B cell (primary cell): ENCODE measurements at regions of chr3 and their contacts with region 1.

Region 1: DNA sequence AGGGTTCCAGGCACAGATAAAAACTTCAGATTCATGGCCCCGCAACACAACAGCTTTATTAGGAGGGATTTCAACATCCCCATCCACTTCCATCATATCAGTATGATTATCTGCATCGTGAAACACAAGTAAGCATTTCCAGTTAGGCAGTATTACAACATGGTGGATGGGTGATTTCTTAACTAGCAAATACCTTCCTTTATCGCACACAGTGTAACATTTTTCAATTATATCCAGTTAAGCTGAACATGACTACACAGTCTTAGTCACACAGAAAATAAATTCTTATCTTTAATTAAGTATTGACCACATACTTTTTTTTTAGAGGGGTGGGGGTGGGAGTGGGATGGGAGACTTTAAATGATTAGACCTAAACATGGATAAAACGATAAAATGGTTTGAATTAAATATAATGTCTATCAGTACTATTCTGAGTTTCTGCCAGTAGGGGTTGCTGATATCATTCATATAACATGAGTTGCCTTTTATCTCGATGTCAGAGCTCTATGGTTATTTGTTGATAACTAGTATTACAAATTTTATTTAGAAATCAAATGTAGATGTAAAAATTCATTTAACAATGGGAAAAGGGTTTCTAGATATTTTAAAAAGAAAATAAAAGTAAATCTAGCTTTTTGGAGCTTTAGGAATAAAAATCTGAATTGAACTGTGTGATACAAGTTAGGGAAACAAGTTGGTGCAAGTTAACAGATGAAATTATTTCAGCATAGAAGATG is 146.6 kb downstream of the TBL1XR1 start:
- DNase-seq: peak; percentile 69
- ATAC-seq: peak; percentile 72
- H3K4me3 ChIP-seq: no peak overlapping the region
- H3K4me3 Mint-ChIP-seq: no peak overlapping the region
- H3K27ac ChIP-seq: no peak overlapping the region
- H3K27ac Mint-ChIP-seq: no peak overlapping the region
- H3K4me1 ChIP-seq: no peaks in the 10 kb centered on the region
- H3K4me1 Mint-ChIP-seq: peaks cover 11% of the 10 kb centered on the region
- H3K27me3 ChIP-seq: no peaks in the 10 kb centered on the region
- H3K27me3 Mint-ChIP-seq: no peaks in the 10 kb centered on the region
- CTCF ChIP-seq: peak; percentile 85

Region 2: GRCh38 chr3:177131927-177132636 is 81.4 kb after region 1 on chr3:
- CTCF ChIA-PET with region 1: no interaction called
- POLR2A ChIA-PET with region 1: no interaction called
- intact Hi-C with region 1: no loop called
- DNase-seq: no peak
- ATAC-seq: no peak
- H3K4me3 ChIP-seq: no peak overlapping the region
- H3K4me3 Mint-ChIP-seq: no peak overlapping the region
- H3K27ac ChIP-seq: peak overlapping the region in 1 of 2 donors; percentile 28
- H3K27ac Mint-ChIP-seq: peak overlapping the region; percentile 12
- H3K4me1 ChIP-seq: peaks cover 21% of the 10 kb centered on the region in 2 donors
- H3K4me1 Mint-ChIP-seq: peaks cover 65% of the 10 kb centered on the region
- H3K27me3 ChIP-seq: no peaks in the 10 kb centered on the region
- H3K27me3 Mint-ChIP-seq: no peaks in the 10 kb centered on the region
- CTCF ChIP-seq: no peak

Region 3: DNA sequence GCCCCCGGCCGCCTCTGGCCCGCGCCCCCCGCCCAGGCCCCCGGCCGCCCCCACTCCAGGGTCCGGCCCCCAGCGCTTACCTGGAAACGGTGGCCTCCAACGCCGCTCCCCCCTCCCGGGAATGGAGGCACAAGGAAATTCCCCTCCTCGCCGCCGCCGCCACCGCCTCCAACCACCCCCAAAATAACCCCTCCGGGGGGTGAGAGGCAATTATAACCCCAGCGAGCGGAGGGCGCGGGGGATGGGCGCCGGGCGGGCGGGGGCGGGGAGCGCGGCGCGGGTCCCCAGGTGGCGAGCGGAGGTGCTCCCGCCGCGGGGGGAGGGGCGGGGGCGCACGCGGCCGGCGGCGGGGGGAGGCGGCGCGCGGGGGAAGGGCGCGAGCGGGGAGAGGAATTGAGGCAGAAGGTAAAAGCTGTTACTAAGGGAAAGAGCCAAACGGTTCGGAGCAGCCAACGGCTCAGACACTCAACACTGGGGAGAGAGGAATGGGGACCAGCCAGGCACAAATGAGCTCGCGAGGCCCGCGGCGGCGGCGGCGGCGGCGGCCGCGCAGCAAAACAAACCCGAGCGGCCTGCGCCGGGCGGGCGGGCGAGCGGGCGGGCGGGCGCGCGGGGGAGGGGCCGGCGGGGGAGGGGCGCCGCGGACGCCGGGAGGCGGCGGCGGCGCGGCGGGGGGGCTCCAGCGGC is 146.5 kb after region 1 on chr3 and contains the start of gene TBL1XR1:
- CTCF ChIA-PET with region 1: interaction called, 25 read pairs
- POLR2A ChIA-PET with region 1: interaction called, 4 read pairs
- intact Hi-C with region 1: loop called (anchors 2 kb)
- DNase-seq: peak; percentile 93
- ATAC-seq: peak; percentile 60
- H3K4me3 ChIP-seq: peak within 1 kb of the TSS; percentile 94 to 99 (median 98)
- H3K4me3 Mint-ChIP-seq: peak within 1 kb of the TSS; percentile 99
- H3K27ac ChIP-seq: peak within 1 kb of the TSS; percentile 89 to 90
- H3K27ac Mint-ChIP-seq: peak within 1 kb of the TSS; percentile 97
- H3K4me1 ChIP-seq: peaks cover 46 to 53% of the 10 kb centered on the region in 2 donors
- H3K4me1 Mint-ChIP-seq: peaks cover 64% of the 10 kb centered on the region
- H3K27me3 ChIP-seq: no peaks in the 10 kb centered on the region
- H3K27me3 Mint-ChIP-seq: no peaks in the 10 kb centered on the region
- CTCF ChIP-seq: no peak
- total RNA-seq, gene TBL1XR1: 128 and 138 TPM in 2 replicates

Region 4: DNA sequence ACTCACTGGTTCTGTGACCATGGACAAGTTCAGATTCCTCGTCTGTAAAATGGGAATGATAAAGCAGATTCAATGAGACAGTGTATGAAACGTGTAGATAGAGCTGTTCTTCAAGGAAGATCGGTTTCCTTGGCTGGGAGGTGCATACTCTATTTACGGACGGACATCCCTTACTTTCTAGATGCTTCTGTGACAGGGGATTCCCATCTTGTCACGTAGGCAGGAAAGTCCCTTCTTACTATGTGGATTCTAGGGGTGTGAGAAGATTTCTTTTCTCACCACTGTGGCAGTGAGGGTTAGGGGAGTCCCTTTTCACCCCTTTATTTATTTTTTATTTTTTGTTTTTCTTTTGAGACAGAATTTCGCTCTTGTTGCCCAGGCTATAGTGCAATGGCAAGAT is 327.5 kb after region 1 on chr3:
- CTCF ChIA-PET with region 1: interaction called, 35 read pairs
- POLR2A ChIA-PET with region 1: no interaction called
- intact Hi-C with region 1: loop called (anchors 1 kb)
- DNase-seq: peak; percentile 70
- ATAC-seq: peak; percentile 43
- H3K4me3 ChIP-seq: no peak overlapping the region
- H3K4me3 Mint-ChIP-seq: peak overlapping the region; percentile 59
- H3K27ac ChIP-seq: no peak overlapping the region
- H3K27ac Mint-ChIP-seq: peak overlapping the region; percentile 47
- H3K4me1 ChIP-seq: peaks cover 22% of the 10 kb centered on the region in 2 donors
- H3K4me1 Mint-ChIP-seq: peaks cover 40% of the 10 kb centered on the region
- H3K27me3 ChIP-seq: no peaks in the 10 kb centered on the region
- H3K27me3 Mint-ChIP-seq: no peaks in the 10 kb centered on the region
- CTCF ChIP-seq: no peak

Region 5: DNA sequence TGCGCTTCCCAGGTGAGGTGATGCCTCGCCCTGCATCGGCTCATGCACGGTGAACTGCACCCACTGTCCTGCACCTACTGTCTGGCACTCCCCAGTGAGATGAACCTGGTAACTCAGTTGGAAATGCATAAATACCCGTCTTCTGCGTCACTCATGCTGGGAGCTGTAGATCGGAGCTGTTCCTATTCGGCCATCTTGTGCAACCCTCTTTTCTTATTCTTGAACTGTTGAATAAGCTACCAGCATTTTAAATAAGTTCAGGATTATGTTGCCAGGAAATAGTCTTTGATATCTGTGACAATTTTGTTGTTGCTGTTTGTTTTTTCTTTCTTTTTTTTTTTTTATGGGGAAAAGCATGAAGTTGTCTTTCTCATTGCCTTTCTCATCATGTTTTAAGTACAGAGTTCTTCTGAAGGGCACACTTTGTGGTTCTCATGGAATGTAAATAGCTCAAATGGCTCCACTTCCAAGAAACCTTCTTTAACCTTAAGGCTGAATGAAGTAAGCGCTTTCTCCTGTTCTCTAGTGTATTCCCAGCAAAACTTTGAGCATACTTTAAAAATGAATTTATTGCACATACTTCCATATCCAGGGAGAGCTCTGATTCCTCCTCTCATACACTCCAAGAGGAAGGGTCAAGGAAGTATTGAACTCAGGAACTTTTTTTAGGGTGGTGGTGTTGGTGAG is 614.6 kb after region 1 on chr3:
- CTCF ChIA-PET with region 1: interaction called, 11 read pairs
- POLR2A ChIA-PET with region 1: no interaction called
- intact Hi-C with region 1: no loop called
- DNase-seq: no peak
- ATAC-seq: no peak
- H3K4me3 ChIP-seq: no peak overlapping the region
- H3K4me3 Mint-ChIP-seq: no peak overlapping the region
- H3K27ac ChIP-seq: no peak overlapping the region
- H3K27ac Mint-ChIP-seq: no peak overlapping the region
- H3K4me1 ChIP-seq: no peaks in the 10 kb centered on the region
- H3K4me1 Mint-ChIP-seq: no peaks in the 10 kb centered on the region
- H3K27me3 ChIP-seq: no peaks in the 10 kb centered on the region
- H3K27me3 Mint-ChIP-seq: no peaks in the 10 kb centered on the region
- CTCF ChIP-seq: no peak

Region 6: DNA sequence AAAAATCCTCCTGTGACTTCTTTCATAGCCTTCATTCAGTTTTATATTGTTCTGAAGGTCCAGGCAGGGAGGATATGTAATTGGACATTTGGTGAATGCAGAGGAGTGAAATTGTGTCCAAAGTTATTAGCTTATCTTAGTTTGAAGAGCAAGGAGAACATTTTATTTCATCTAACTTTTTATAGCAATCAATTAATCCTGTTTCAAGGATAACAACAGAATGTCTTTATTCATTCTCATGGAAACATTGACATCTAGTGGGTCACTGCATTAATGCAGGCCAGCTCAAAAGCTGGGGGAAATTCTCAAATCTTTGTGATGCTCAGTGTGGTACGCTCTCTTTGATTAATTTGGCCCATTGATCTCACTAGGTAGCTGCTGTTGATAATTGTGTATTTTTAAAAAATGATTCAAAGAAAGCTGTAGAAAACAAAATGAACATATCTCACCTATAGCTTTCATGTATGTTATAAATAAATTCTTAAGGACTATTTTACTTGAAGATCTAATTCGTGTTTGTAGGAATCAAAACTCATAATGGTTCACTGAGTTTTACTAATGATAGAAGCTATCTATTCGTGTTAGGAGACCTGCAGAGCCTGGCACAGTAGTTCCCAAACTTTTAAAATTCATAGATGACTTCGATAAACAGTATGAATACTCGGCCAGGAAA is 1334.7 kb after region 1 on chr3:
- CTCF ChIA-PET with region 1: interaction called, 15 read pairs
- POLR2A ChIA-PET with region 1: no interaction called
- intact Hi-C with region 1: no loop called
- DNase-seq: peak; percentile 34
- ATAC-seq: no peak
- H3K4me3 ChIP-seq: no peak overlapping the region
- H3K4me3 Mint-ChIP-seq: no peak overlapping the region
- H3K27ac ChIP-seq: no peak overlapping the region
- H3K27ac Mint-ChIP-seq: no peak overlapping the region
- H3K4me1 ChIP-seq: no peaks in the 10 kb centered on the region
- H3K4me1 Mint-ChIP-seq: no peaks in the 10 kb centered on the region
- H3K27me3 ChIP-seq: no peaks in the 10 kb centered on the region
- H3K27me3 Mint-ChIP-seq: no peaks in the 10 kb centered on the region
- CTCF ChIP-seq: peak; percentile 74